Activated B cell treated with CpG ODN at 0.5 μM for 24 hours (primary cell): ENCODE measurements at regions of chr11 and their contacts with region 1.

Region 1: GRCh38 chr11:88543902-88544655 is 206.5 kb upstream of the CTSC start:
- DNase-seq: peak; percentile 32
- ATAC-seq: peak; percentile 65
- H3K4me3 Mint-ChIP-seq: no peak overlapping the region
- H3K27ac Mint-ChIP-seq: no peak overlapping the region
- H3K4me1 Mint-ChIP-seq: no peaks in the 10 kb centered on the region
- H3K27me3 Mint-ChIP-seq: peaks cover 1% of the 10 kb centered on the region
- CTCF ChIP-seq: no peak

Region 2: GRCh38 chr11:87352759-87353707 is 1191.0 kb before region 1 on chr11:
- CTCF ChIA-PET with region 1: no interaction called
- POLR2A ChIA-PET with region 1: no interaction called
- intact Hi-C with region 1: loop called (anchors 1 kb)
- DNase-seq: peak; percentile 75
- ATAC-seq: peak; percentile 95
- H3K4me3 Mint-ChIP-seq: no peak overlapping the region
- H3K27ac Mint-ChIP-seq: no peak overlapping the region
- H3K4me1 Mint-ChIP-seq: peaks cover 14% of the 10 kb centered on the region
- H3K27me3 Mint-ChIP-seq: no peaks in the 10 kb centered on the region
- CTCF ChIP-seq: peak; percentile 88

Region 3: GRCh38 chr11:88016392-88017170 is 527.5 kb before region 1 on chr11:
- CTCF ChIA-PET with region 1: interaction called, 47 read pairs
- POLR2A ChIA-PET with region 1: no interaction called
- intact Hi-C with region 1: loop called (anchors 1 kb)
- DNase-seq: no peak
- ATAC-seq: peak; percentile 37
- H3K4me3 Mint-ChIP-seq: no peak overlapping the region
- H3K27ac Mint-ChIP-seq: no peak overlapping the region
- H3K4me1 Mint-ChIP-seq: no peaks in the 10 kb centered on the region
- H3K27me3 Mint-ChIP-seq: no peaks in the 10 kb centered on the region
- CTCF ChIP-seq: peak; percentile 29

Region 4: DNA sequence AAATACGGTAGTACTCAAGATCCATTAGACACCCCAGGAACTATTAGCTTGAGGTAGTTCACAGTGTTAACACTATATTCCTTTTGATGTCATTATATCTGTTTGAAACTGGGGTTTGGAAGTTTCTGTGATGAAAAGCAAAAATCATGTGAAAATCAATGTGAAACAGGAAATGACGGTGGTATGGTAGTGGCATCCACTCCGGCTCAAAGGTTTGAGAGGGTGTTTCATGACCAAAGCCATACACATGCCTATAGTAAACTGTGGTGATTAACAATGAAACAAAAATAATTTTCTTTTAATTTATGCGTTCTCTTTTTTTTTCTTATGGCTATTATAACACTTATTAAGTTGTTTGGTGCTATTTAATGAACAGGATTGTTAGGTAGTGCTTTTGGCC is 379.8 kb before region 1 on chr11:
- CTCF ChIA-PET with region 1: no interaction called
- POLR2A ChIA-PET with region 1: no interaction called
- intact Hi-C with region 1: loop called (anchors 2 kb)
- DNase-seq: no peak
- ATAC-seq: no peak
- H3K4me3 Mint-ChIP-seq: no peak overlapping the region
- H3K27ac Mint-ChIP-seq: no peak overlapping the region
- H3K4me1 Mint-ChIP-seq: no peaks in the 10 kb centered on the region
- H3K27me3 Mint-ChIP-seq: peaks cover 4% of the 10 kb centered on the region
- CTCF ChIP-seq: no peak

Region 5: DNA sequence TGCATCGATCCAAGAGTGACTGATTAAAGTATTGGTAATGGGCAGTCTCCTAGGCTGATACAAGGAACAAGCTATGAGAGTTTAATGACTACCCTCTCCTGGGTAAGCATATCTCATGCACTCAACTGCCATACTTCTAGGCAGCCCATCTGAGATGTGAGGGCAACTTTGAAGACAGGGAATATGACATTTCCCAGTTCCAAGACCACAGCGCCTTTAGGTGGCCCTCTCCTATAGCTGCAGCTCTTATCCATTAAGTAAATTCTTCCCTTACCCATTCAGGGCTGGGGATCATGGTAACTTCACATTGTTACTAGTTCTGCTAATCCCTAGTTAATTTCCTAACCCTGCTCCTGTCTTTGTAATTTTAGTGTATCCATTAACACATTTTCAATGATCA is 49.2 kb before region 1 on chr11:
- CTCF ChIA-PET with region 1: no interaction called
- POLR2A ChIA-PET with region 1: no interaction called
- intact Hi-C with region 1: no loop called
- DNase-seq: no peak
- ATAC-seq: no peak
- H3K4me3 Mint-ChIP-seq: no peak overlapping the region
- H3K27ac Mint-ChIP-seq: no peak overlapping the region
- H3K4me1 Mint-ChIP-seq: no peaks in the 10 kb centered on the region
- H3K27me3 Mint-ChIP-seq: no peaks in the 10 kb centered on the region
- CTCF ChIP-seq: no peak

Region 6: DNA sequence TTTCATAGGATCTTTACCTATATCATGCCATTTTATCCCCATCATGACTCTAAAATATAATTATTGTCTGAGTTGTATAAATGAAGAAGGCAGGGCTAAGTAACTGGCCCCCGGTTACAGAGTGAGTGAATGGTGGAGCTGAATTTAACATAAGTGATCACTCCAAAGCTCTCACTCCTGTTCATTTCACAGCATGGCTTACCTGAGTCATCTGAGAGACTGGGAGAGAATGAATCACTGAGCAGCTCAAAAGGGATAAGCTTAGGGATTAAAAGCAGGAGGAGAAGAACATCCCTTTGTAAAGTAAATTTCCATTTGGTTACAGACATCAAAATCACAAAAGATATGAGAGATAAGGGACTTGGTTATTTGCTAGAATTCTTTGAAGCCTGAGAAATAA is 87.4 kb after region 1 on chr11:
- CTCF ChIA-PET with region 1: no interaction called
- POLR2A ChIA-PET with region 1: no interaction called
- intact Hi-C with region 1: no loop called
- DNase-seq: no peak
- ATAC-seq: no peak
- H3K4me3 Mint-ChIP-seq: no peak overlapping the region
- H3K27ac Mint-ChIP-seq: no peak overlapping the region
- H3K4me1 Mint-ChIP-seq: no peaks in the 10 kb centered on the region
- H3K27me3 Mint-ChIP-seq: no peaks in the 10 kb centered on the region
- CTCF ChIP-seq: no peak